ENCODE measurements at regions of chr1 and their contacts with region 1.

Region 1: GRCh38 chr1:209692745-209693504 is 11.7 kb upstream of the HSD11B1 start:
- DNase-seq: peak; percentile 70 to 89
- H3K4me3 ChIP-seq: no peak overlapping the region
- CTCF ChIP-seq: peak in 1 of 3 donors; percentile 71
- POLR2A ChIP-seq: no peak

Region 2: GRCh38 chr1:209569455-209570207 is 123.3 kb before region 1 on chr1:
- intact Hi-C with region 1: loop called (anchors 5 kb)
- DNase-seq: peak; percentile 82 to 95
- H3K4me3 ChIP-seq: no peak overlapping the region
- CTCF ChIP-seq: no peak
- POLR2A ChIP-seq: no peak

Region 3: GRCh38 chr1:209627732-209628196 is 65.2 kb before region 1 on chr1:
- intact Hi-C with region 1: loop called (anchors 10 kb)
- DNase-seq: peak; percentile 55 to 94
- H3K4me3 ChIP-seq: no peak overlapping the region
- CTCF ChIP-seq: peak in 1 of 3 donors; percentile 68
- POLR2A ChIP-seq: no peak

Region 4: DNA sequence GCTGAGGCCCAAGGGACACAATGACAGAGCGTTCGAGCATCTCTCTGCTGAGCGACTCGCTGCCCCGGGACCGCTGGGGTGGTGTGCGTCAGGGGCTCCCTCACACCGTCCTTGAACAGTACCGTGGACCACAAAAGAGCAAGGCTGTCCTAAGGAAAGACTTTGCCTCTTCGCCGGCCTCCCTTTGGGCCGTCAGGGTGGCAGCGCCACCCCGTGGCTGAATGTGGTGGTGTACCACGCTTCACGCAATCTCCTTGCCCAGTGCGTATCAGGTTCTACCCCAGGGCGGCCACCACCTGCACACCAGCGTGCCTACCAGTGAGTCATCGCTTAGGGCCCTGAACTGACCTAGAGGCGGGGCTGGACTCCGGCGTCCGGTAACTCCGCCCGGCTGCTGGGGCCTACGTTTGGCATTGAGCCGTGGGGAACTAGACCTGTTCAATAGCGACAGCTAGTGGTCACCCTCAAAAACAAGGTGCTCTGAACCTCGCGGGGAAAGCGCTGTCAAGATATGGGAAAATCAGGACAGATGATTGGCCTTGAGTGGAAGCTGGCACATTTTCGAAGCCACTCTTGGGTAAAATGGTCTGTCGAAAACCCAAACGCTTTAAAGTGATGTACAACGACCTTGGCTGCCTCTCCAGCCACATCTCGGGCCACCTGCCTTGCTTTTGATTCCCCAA is 54.8 kb after region 1 on chr1:
- intact Hi-C with region 1: loop called (anchors 10 kb)
- DNase-seq: peak; percentile 88 to 97
- H3K4me3 ChIP-seq: no peak overlapping the region
- CTCF ChIP-seq: peak in 1 of 3 donors; percentile 71
- POLR2A ChIP-seq: no peak